ENCODE measurements at regions of chr7 and their contacts with region 1.

Region 1: GRCh38 chr7:116525913-116526861 is 1.4 kb downstream of the CAV1 start:
- DNase-seq: peak; percentile 84
- ATAC-seq: peak; percentile 86 to 88

Region 2: DNA sequence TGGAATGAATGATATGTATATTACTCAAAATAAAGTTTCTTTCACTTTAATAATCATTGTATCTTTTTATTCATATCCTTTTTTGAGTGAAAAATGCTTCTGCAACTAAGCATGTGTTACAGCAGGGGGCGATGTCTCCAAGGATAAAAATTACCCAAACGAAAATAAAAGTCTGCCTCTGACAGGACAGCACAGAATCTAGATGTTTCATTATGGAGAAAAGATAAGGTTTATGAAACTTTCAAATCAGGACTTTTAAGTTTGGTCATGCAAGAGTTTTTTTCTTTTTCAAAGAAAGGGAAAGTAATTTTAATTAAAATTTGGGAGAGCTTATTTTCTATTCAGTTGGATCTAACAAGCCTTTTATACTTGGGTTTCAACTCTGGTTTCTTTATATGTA is 267.5 kb before region 1 on chr7:
- intact Hi-C with region 1: loop called (anchors 5 to 10 kb)
- DNase-seq: no peak
- ATAC-seq: peak; percentile 66 to 68

Region 3: GRCh38 chr7:116316833-116317612 is 209.2 kb before region 1 on chr7:
- intact Hi-C with region 1: no loop called
- DNase-seq: peak; percentile 64
- ATAC-seq: peak; percentile 87 to 97

Region 4: DNA sequence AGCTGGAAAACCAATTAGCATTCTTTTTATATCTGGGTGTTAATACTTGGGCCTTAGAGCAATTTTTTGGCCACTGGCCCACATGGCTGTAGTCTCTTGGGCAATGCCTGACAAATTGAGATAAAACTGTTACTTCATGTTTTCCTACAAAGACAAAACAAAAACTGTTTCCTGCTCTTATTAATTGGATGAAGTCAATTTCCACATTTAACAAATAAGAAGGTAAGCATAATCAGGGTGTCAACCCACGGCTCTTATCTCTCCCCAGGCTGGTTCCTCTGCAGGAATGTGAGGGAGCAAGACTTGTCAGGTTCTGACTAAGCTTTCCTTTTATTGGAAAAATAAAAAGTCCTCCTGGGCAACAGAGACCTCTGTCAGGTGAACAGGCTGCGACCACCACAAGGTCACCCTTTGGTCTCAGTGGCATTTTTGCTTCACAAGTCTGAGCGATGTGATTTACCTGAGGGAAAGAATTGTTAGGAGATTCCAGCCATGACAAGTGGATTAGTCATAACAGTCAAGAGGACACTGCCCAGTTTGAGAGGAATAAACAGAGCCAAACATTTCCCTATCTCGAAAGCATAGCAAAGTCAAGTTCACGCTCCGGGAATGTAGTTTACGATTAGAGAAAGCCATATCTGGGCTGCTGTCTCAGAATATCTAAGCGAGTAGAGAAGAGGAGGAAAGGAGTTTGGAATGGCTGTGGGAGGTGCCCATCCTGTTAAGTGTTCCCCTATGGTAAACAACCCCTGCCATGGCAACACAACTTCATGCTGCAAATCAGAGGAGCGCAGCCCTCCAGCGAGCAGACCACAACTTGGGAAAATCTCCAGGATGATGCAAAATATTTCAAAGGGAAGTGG is 171.4 kb before region 1 on chr7:
- intact Hi-C with region 1: loop called in 1 of 2 experiments (anchors 5 kb)
- DNase-seq: peak; percentile 84
- ATAC-seq: peak; percentile 86 to 93

Region 5: DNA sequence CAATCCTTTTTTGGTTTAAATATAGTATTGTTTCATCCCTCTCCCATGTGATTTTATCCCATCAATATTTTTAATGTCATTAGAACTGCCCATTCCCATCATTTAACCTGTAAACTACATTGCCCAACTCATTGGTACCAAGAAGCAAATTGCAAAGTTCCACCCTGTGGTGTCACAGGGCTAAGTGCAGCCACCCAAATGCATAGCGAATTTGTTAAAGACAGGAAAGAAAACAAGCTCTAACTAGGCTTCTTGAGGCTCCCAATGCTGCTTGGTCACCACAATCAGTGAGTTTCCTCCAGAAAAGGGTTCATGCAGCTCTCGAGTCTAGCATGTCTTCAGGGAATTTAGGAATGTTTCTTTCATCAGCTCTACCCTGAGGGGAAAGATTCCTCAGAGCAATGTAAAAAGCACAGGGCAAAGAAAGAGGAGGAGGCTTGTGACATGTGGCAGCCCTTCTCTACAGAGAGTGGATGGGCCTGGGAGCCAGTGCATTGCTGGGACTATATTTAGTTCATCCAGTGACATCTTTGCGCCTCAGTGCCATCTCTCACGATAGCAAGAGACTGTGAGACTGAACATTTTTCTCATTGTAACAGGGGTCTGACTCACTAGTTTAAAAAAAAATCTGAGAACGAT is 56.7 kb after region 1 on chr7:
- intact Hi-C with region 1: loop called (anchors 5 to 10 kb)
- DNase-seq: peak; percentile 53
- ATAC-seq: peak; percentile 89 to 97

Region 6: GRCh38 chr7:116776610-116777289 is 250.6 kb after region 1 on chr7:
- intact Hi-C with region 1: no loop called
- DNase-seq: no peak
- ATAC-seq: peak in 1 of 2 donors; percentile 61